GM10248 (cell line): ENCODE measurements at regions of chr3 and their contacts with region 1.

Region 1: GRCh38 chr3:134212906-134213665 is 37.6 kb downstream of the RYK start:
- DNase-seq: peak; percentile 71
- CTCF ChIP-seq: peak; percentile 93

Region 2: GRCh38 chr3:134039161-134039862 is 173.8 kb before region 1 on chr3:
- CTCF ChIA-PET with region 1: no interaction called
- POLR2A ChIA-PET with region 1: no interaction called
- DNase-seq: no peak
- CTCF ChIP-seq: peak; percentile 8

Region 3: DNA sequence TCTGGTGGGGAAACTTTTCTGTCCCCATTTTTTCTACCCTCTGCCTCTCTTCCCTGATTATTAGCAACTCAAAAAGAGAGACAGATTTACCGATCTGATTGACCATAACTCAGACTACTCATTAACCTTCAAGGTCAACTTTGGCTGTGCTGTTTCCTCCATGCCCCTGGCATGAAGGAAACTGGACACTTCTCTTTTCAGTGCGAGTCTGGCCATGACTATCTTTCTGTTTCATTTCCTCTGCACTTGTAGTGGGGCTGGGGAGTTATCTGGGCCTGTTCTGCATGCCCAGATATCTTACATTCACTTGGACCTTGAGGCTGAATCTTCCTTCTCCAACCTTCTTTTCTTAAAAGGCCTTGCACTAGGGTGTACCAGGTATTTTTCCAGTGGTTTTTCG is 106.5 kb before region 1 on chr3:
- CTCF ChIA-PET with region 1: no interaction called
- POLR2A ChIA-PET with region 1: no interaction called
- DNase-seq: peak; percentile 26
- CTCF ChIP-seq: no peak

Region 4: DNA sequence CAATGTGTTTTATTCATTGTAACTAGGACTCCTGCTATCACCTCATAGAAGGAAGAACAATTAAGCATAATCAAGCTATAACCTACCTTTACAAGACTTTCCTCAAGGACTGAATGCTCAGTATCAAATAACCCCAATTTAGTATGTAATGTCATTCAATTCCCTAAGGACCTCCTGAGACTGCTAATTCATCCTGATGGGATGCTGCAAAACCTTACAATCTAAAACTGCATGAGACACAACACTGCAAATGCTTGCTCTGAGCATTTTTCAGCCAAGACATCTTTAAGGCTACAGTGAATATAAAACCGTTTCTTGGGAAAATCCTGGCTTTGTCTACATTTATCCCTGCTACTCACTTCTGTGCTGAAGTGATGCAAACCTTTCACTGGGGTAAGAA is 32.3 kb before region 1 on chr3:
- CTCF ChIA-PET with region 1: interaction called, 10 read pairs
- POLR2A ChIA-PET with region 1: no interaction called
- DNase-seq: no peak
- CTCF ChIP-seq: no peak

Region 5: GRCh38 chr3:134197681-134198261 is 15.3 kb before region 1 on chr3:
- CTCF ChIA-PET with region 1: interaction called, 92 read pairs
- POLR2A ChIA-PET with region 1: no interaction called
- DNase-seq: peak; percentile 63
- CTCF ChIP-seq: peak; percentile 72

Region 6: DNA sequence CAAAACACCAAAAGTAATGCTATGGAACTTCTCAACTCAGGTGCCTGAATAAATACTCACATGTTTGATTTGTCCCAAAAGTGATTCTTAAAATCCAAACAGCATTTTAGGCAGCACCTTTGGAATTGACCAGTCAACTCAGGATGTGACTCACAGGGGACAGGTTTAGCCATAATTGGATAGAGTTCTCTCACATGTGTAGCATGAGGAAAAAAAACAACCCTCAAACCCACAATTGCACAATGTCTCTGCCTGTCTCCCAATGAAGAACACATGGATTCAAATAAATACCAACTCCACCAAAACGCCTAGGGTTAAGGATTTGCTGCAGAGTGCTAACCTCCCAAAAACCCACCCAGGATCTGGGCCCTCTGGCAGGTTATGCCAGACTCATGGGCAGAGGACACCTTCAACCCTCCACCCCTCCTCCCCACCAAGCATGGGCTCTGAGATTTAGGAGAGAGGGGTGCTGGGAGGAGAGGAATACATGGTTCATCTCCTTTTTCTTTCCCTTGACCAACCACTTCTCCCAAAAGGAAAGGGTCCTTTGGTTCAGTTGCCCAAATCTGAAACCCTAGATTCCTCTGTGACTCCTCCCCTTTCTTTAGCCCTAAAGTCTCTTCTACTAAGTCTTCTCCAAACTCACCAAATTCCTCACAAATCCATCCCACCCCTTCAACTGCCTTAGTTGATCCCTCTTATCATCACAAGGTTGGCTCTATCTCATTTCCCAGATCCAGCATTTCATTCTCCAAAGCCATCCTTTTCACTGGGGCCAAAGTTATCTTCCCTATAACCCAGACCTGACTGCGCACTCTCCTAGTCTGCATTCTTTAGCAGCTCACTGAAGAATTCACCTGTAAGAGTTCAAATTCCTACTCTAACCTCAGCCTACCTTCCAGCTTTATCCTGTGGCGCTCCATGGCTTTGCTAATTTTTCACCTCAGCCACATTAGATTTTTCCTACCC is 29.8 kb after region 1 on chr3:
- CTCF ChIA-PET with region 1: interaction called, 55 read pairs
- POLR2A ChIA-PET with region 1: no interaction called
- DNase-seq: no peak
- CTCF ChIP-seq: no peak

Region 7: GRCh38 chr3:134299185-134299887 is 86.2 kb after region 1 on chr3:
- CTCF ChIA-PET with region 1: interaction called, 16 read pairs
- POLR2A ChIA-PET with region 1: no interaction called
- DNase-seq: no peak
- CTCF ChIP-seq: peak; percentile 22

Region 8: DNA sequence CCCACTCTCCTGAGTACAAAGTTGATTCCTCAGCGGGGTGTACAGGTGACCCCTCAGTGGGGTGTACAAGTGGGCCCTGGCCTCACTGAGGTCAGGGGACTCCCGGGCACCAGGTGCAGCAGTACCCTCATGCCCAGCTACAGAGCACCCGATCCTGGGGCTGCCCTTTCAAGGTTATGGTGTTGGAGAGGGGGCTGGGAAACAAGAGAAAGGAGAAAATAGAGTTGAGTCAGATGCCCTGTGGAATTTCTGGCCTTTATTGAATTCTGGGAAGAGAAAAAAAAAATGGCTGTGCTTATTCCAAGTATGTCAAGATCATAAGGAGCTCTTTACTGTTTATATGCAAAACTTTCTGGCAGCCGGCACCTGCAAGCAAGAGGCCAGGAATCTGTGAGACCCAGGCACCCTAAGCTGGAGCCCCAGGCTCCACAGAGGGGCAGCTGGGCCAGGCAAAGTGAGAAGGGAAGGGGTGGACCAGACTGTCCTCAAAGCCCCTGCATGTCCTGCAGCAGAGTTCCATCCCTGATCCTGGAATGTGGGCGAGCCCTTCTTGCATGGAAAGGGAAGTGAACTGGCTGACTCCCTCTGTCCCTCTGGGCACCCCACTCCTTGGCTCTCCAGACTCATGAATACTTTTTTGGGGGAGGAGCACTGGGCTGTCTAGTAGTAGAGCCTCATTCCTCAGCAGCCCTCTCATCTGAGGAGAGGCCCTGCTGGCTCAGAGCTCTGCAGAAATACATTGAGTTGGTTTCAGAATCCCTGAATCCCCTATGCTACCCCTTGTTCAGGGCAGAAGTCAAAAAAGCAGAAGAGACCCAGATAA is 118.1 kb after region 1 on chr3:
- CTCF ChIA-PET with region 1: no interaction called
- POLR2A ChIA-PET with region 1: no interaction called
- DNase-seq: no peak
- CTCF ChIP-seq: no peak

Region 9: DNA sequence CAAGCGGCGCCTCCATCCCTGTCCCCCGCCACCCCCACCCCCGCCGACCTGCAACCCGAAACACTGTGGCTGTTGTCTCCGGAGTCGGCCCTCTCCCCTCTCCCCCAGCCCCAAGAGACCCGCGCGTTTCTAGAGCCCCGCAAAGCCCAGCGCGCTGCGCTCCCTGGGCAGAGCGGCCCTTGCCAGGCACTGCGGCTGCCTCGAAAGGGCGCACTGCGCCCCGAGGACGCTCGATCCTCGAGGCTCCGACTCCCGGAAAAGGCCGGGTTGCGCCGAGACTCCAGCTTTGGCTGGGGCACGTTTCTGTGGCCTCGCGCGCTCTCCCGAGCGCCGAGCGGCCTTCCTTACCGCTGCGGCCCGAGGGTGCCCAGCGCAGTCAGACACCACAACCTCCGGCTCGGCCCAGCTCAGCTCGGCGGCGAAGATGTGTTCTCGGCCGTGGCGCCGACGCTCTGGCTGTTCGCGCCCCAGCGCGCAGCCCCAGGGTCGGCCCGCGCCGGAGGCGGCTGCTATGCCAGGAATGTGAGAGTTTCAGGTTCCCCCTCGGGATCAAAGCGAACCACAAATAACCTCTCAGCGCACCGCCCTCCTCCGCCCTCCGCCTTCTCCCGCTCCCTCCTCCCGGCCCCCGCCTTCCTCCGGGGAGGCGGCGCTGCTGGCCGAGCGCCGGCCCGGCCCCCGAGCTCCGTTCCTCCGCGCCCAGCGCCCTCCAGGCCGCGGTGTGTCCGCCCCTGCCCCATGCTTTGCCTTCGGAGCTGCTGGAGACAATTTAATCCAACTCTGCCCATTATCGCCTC is 161.1 kb after region 1 on chr3 and contains the start of gene AMOTL2:
- CTCF ChIA-PET with region 1: no interaction called
- POLR2A ChIA-PET with region 1: no interaction called
- DNase-seq: peak; percentile 62
- CTCF ChIP-seq: no peak

Region 10: GRCh38 chr3:134473868-134474546 is 260.9 kb after region 1 on chr3:
- CTCF ChIA-PET with region 1: interaction called, 26 read pairs
- POLR2A ChIA-PET with region 1: no interaction called
- DNase-seq: peak; percentile 50
- CTCF ChIP-seq: peak; percentile 49